Ovary (tissue), 10 donors: ENCODE measurements at regions of chr16 and their contacts with region 1.

Region 1: GRCh38 chr16:8230497-8230896 is 359.8 kb downstream of the TMEM114 start:
- DNase-seq: no peak
- H3K4me3 ChIP-seq: no peak overlapping the region
- H3K27ac ChIP-seq: no peak overlapping the region
- H3K4me1 ChIP-seq: no peaks in the 10 kb centered on the region
- H3K27me3 ChIP-seq: no peaks in the 10 kb centered on the region
- CTCF ChIP-seq: no peak
- EP300 ChIP-seq: no peak
- POLR2A ChIP-seq: no peak

Region 2: DNA sequence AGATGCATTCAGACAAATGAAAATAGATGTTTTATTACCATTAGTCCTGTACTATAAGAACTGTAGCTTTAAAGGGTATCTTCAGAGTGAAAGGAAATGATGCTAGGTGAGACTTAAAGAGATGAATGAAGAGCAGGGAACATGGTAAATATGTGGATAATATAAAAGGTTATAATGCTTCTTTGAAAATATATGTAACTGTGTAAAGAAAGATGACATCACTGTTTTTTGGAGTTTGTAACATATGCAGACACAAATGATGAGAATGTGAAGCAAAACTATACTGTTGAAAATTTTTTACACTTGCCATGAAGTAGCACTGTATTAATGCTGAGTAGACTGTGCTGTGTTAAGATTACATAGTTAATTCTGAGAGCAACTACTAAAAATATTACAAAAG is 1833.0 kb before region 1 on chr16:
- intact Hi-C with region 1: loop called in 1 of 4 experiments (anchors 5 kb)
- DNase-seq: no peak
- H3K4me3 ChIP-seq: no peak overlapping the region
- H3K27ac ChIP-seq: no peak overlapping the region
- H3K4me1 ChIP-seq: no peaks in the 10 kb centered on the region
- H3K27me3 ChIP-seq: no peaks in the 10 kb centered on the region
- CTCF ChIP-seq: no peak
- EP300 ChIP-seq: no peak
- POLR2A ChIP-seq: no peak